Activated B cell treated with CpG ODN at 0.5 μM for 24 hours (primary cell): ENCODE measurements at regions of chr6 and their contacts with region 1.

Region 1: DNA sequence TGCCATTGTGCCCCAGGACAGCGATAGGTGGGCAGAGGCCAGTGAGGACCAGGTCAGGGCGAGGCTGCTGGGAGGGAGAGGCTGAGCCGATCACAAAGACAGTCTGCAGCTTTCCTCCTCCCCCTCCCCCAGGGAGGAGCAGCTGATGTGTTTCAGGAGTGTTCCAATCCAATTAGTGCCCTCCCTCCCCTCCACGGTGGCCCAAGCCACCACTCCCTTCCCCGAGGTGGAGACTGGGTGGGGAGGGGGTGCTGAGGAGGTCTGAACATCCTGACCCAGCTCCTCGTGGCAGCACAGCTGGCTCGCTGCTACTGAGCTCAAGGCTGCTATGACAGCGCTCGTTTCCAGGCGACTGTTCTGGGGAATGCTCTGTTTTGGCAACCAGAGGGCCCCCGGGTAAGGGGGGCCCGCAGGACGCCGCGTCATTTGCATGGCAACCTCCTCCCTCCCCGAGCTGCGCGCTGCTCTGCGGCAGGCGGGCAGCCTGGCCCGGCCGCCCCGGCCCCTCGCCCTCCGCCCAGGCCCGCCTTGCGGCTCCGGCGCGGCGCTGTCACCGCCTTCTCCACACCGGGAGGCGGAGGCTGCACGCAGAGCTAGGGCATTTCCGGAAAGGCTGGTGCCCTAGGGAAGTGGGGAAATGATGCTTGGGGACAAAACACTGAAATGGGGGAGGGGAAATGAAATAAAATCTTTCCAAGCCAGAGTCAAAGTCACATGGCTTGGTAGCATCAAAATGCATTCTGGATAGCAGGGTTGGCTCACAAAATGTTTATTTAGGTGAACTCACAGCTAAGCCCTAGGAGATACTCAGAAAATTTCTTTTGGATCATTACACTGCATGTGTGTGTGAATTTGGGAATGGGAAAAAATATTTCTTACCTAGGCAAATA is 67.4 kb upstream of the PIM1 start:
- DNase-seq: peak; percentile 70
- ATAC-seq: peak; percentile 80
- H3K4me3 Mint-ChIP-seq: peak overlapping the region; percentile 78
- H3K27ac Mint-ChIP-seq: peak overlapping the region; percentile 82
- H3K4me1 Mint-ChIP-seq: peaks cover 38% of the 10 kb centered on the region
- H3K27me3 Mint-ChIP-seq: no peaks in the 10 kb centered on the region
- CTCF ChIP-seq: no peak

Region 2: GRCh38 chr6:37029249-37029971 is 73.1 kb before region 1 on chr6:
- CTCF ChIA-PET with region 1: no interaction called
- POLR2A ChIA-PET with region 1: interaction called, 4 read pairs
- intact Hi-C with region 1: loop called (anchors 5 kb)
- DNase-seq: no peak
- ATAC-seq: peak; percentile 63
- H3K4me3 Mint-ChIP-seq: no peak overlapping the region
- H3K27ac Mint-ChIP-seq: peak overlapping the region; percentile 68
- H3K4me1 Mint-ChIP-seq: peaks cover 50% of the 10 kb centered on the region
- H3K27me3 Mint-ChIP-seq: no peaks in the 10 kb centered on the region
- CTCF ChIP-seq: no peak

Region 3: GRCh38 chr6:37077905-37078296 is 24.6 kb before region 1 on chr6:
- CTCF ChIA-PET with region 1: no interaction called
- POLR2A ChIA-PET with region 1: no interaction called
- intact Hi-C with region 1: no loop called
- DNase-seq: no peak
- ATAC-seq: no peak
- H3K4me3 Mint-ChIP-seq: no peak overlapping the region
- H3K27ac Mint-ChIP-seq: no peak overlapping the region
- H3K4me1 Mint-ChIP-seq: no peaks in the 10 kb centered on the region
- H3K27me3 Mint-ChIP-seq: no peaks in the 10 kb centered on the region
- CTCF ChIP-seq: no peak

Region 4: GRCh38 chr6:37113976-37114375 is 11.5 kb after region 1 on chr6:
- CTCF ChIA-PET with region 1: no interaction called
- POLR2A ChIA-PET with region 1: no interaction called
- intact Hi-C with region 1: no loop called
- DNase-seq: no peak
- ATAC-seq: no peak
- H3K4me3 Mint-ChIP-seq: no peak overlapping the region
- H3K27ac Mint-ChIP-seq: no peak overlapping the region
- H3K4me1 Mint-ChIP-seq: no peaks in the 10 kb centered on the region
- H3K27me3 Mint-ChIP-seq: peaks cover 2% of the 10 kb centered on the region
- CTCF ChIP-seq: no peak

Region 5: GRCh38 chr6:37131104-37131959 is 28.8 kb after region 1 on chr6:
- CTCF ChIA-PET with region 1: no interaction called
- POLR2A ChIA-PET with region 1: interaction called, 10 read pairs
- intact Hi-C with region 1: no loop called
- DNase-seq: no peak
- ATAC-seq: no peak
- H3K4me3 Mint-ChIP-seq: no peak overlapping the region
- H3K27ac Mint-ChIP-seq: no peak overlapping the region
- H3K4me1 Mint-ChIP-seq: peaks cover 12% of the 10 kb centered on the region
- H3K27me3 Mint-ChIP-seq: no peaks in the 10 kb centered on the region
- CTCF ChIP-seq: no peak

Region 6: GRCh38 chr6:37149745-37150144 is 47.2 kb after region 1 on chr6:
- CTCF ChIA-PET with region 1: no interaction called
- POLR2A ChIA-PET with region 1: interaction called, 13 read pairs
- intact Hi-C with region 1: loop called (anchors 5 kb)
- DNase-seq: no peak
- ATAC-seq: peak; percentile 63
- H3K4me3 Mint-ChIP-seq: peak overlapping the region; percentile 77
- H3K27ac Mint-ChIP-seq: peak overlapping the region; percentile 88
- H3K4me1 Mint-ChIP-seq: peaks cover 57% of the 10 kb centered on the region
- H3K27me3 Mint-ChIP-seq: no peaks in the 10 kb centered on the region
- CTCF ChIP-seq: no peak

Region 7: GRCh38 chr6:37169496-37170272 is 67.2 kb after region 1 on chr6 and contains the start of gene PIM1:
- CTCF ChIA-PET with region 1: interaction called, 13 read pairs
- POLR2A ChIA-PET with region 1: interaction called, 48 read pairs
- intact Hi-C with region 1: loop called (anchors 1 kb)
- DNase-seq: peak; percentile 88
- ATAC-seq: peak; percentile 84
- H3K4me3 Mint-ChIP-seq: peak within 1 kb of the TSS; percentile 95
- H3K27ac Mint-ChIP-seq: peak within 1 kb of the TSS; percentile 96
- H3K4me1 Mint-ChIP-seq: peaks cover 47% of the 10 kb centered on the region
- H3K27me3 Mint-ChIP-seq: no peaks in the 10 kb centered on the region
- CTCF ChIP-seq: no peak
- total RNA-seq, gene PIM1: 272 and 283 TPM in 2 replicates

Region 8: GRCh38 chr6:37182736-37183590 is 80.4 kb after region 1 on chr6:
- CTCF ChIA-PET with region 1: no interaction called
- POLR2A ChIA-PET with region 1: no interaction called
- intact Hi-C with region 1: no loop called
- DNase-seq: no peak
- ATAC-seq: peak; percentile 96
- H3K4me3 Mint-ChIP-seq: peak overlapping the region; percentile 29
- H3K27ac Mint-ChIP-seq: peak overlapping the region; percentile 71
- H3K4me1 Mint-ChIP-seq: peaks cover 27% of the 10 kb centered on the region
- H3K27me3 Mint-ChIP-seq: no peaks in the 10 kb centered on the region
- CTCF ChIP-seq: no peak